PC-3 (cell line): ENCODE measurements at regions of chr3 and their contacts with region 1.

Region 1: DNA sequence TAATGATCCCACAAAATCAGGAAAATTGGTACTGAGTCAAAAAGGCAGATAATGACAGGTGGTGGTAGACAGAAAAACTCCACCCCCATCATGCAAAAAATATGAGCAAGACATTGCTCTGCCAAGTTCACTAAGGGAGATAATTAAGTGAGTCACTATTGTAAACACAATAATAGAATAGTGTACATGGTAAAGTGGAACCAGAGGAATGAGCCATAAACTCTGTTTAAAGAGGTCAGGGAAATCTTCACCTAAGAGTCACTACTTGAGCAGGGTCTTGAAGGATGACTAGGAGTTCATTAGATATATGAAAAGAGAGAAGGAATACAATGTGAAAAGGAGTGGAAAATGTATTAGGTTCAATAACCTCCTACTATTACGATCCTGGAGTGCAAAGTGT is 213.4 kb upstream of the PEX5L start:
- DNase-seq: peak; percentile 95
- ATAC-seq: peak; percentile 88
- H3K4me3 ChIP-seq: no peak overlapping the region
- H3K27ac ChIP-seq: peak overlapping the region; percentile 58
- H3K4me1 ChIP-seq: peaks cover 46% of the 10 kb centered on the region
- H3K27me3 ChIP-seq: no peaks in the 10 kb centered on the region
- CTCF ChIP-seq: no peak

Region 2: GRCh38 chr3:179794355-179794754 is 455.8 kb before region 1 on chr3:
- CTCF ChIA-PET with region 1: no interaction called
- POLR2A ChIA-PET with region 1: no interaction called
- intact Hi-C with region 1: no loop called
- DNase-seq: no peak
- ATAC-seq: no peak
- H3K4me3 ChIP-seq: no peak overlapping the region
- H3K27ac ChIP-seq: no peak overlapping the region
- H3K4me1 ChIP-seq: no peaks in the 10 kb centered on the region
- H3K27me3 ChIP-seq: no peaks in the 10 kb centered on the region
- CTCF ChIP-seq: no peak

Region 3: GRCh38 chr3:179811321-179812095 is 438.7 kb before region 1 on chr3:
- CTCF ChIA-PET with region 1: no interaction called
- POLR2A ChIA-PET with region 1: no interaction called
- intact Hi-C with region 1: loop called (anchors 10 kb)
- DNase-seq: peak; percentile 88
- ATAC-seq: peak; percentile 81
- H3K4me3 ChIP-seq: no peak overlapping the region
- H3K27ac ChIP-seq: peak overlapping the region; percentile 77
- H3K4me1 ChIP-seq: peaks cover 13% of the 10 kb centered on the region; the same call in 1 of the 2 replicates
- H3K27me3 ChIP-seq: no peaks in the 10 kb centered on the region
- CTCF ChIP-seq: peak; percentile 93

Region 4: GRCh38 chr3:180059356-180059755 is 190.8 kb before region 1 on chr3:
- CTCF ChIA-PET with region 1: no interaction called
- POLR2A ChIA-PET with region 1: no interaction called
- intact Hi-C with region 1: no loop called
- DNase-seq: peak; percentile 61
- ATAC-seq: peak; percentile 70
- H3K4me3 ChIP-seq: no peak overlapping the region
- H3K27ac ChIP-seq: no peak overlapping the region
- H3K4me1 ChIP-seq: peaks cover 11% of the 10 kb centered on the region
- H3K27me3 ChIP-seq: no peaks in the 10 kb centered on the region
- CTCF ChIP-seq: no peak

Region 5: GRCh38 chr3:180116658-180117057 is 133.5 kb before region 1 on chr3:
- CTCF ChIA-PET with region 1: no interaction called
- POLR2A ChIA-PET with region 1: no interaction called
- intact Hi-C with region 1: no loop called
- DNase-seq: no peak
- ATAC-seq: no peak
- H3K4me3 ChIP-seq: no peak overlapping the region
- H3K27ac ChIP-seq: no peak overlapping the region
- H3K4me1 ChIP-seq: no peaks in the 10 kb centered on the region
- H3K27me3 ChIP-seq: no peaks in the 10 kb centered on the region
- CTCF ChIP-seq: no peak

Region 6: DNA sequence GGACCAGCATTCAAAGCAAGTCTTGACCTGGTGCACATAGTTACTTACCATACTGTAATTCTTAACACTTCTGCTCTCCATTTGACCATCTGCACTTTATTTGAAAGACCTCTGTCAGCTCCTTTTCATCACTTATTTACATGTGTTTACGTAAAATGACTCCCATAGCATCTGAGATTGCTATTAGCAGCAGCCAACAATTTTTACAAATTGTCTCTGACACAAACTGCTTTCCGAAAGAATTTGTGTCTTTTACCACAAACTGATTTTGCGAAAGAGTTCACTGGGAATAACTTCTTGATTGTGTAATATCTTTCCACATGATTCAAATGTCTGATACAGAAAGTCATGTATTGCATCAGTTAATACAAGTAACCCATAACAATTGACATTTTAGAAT is 69.4 kb before region 1 on chr3:
- CTCF ChIA-PET with region 1: no interaction called
- POLR2A ChIA-PET with region 1: no interaction called
- intact Hi-C with region 1: no loop called
- DNase-seq: no peak
- ATAC-seq: no peak
- H3K4me3 ChIP-seq: no peak overlapping the region
- H3K27ac ChIP-seq: no peak overlapping the region
- H3K4me1 ChIP-seq: no peaks in the 10 kb centered on the region
- H3K27me3 ChIP-seq: no peaks in the 10 kb centered on the region
- CTCF ChIP-seq: no peak

Region 7: GRCh38 chr3:180267202-180267843 is 17.2 kb after region 1 on chr3:
- CTCF ChIA-PET with region 1: no interaction called
- POLR2A ChIA-PET with region 1: interaction called, 15 read pairs
- intact Hi-C with region 1: no loop called
- DNase-seq: no peak
- ATAC-seq: no peak
- H3K4me3 ChIP-seq: no peak overlapping the region
- H3K27ac ChIP-seq: no peak overlapping the region
- H3K4me1 ChIP-seq: no peaks in the 10 kb centered on the region
- H3K27me3 ChIP-seq: no peaks in the 10 kb centered on the region
- CTCF ChIP-seq: no peak

Region 8: GRCh38 chr3:180306691-180307090 is 56.5 kb after region 1 on chr3:
- CTCF ChIA-PET with region 1: interaction called, 9 read pairs
- POLR2A ChIA-PET with region 1: no interaction called
- intact Hi-C with region 1: loop called (anchors 1 kb)
- DNase-seq: peak; percentile 90
- ATAC-seq: peak; percentile 87
- H3K4me3 ChIP-seq: peak overlapping the region; percentile 48
- H3K27ac ChIP-seq: peak overlapping the region; percentile 47
- H3K4me1 ChIP-seq: peaks cover 40% of the 10 kb centered on the region
- H3K27me3 ChIP-seq: no peaks in the 10 kb centered on the region
- CTCF ChIP-seq: no peak

Region 9: DNA sequence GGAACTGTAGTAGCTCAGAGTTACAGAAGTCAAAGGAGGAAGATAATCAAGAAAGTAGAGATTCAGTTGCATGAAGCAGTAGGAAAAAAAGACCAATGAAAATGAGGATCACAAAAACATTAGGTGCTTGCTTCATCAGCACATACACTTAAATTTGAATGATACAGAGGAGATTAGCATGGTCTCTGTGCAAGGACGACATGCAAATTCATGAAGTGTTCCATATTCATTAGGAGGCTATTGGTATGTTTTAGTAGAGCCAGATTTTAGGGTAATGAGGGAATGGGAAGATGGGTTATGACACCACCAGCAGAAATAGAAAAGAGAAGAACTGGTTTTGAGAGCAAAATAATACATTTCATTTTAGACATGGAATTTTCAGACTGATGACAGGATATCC is 330.8 kb after region 1 on chr3:
- CTCF ChIA-PET with region 1: no interaction called
- POLR2A ChIA-PET with region 1: no interaction called
- intact Hi-C with region 1: loop called (anchors 5 kb)
- DNase-seq: no peak
- ATAC-seq: no peak
- H3K4me3 ChIP-seq: no peak overlapping the region
- H3K27ac ChIP-seq: no peak overlapping the region
- H3K4me1 ChIP-seq: no peaks in the 10 kb centered on the region
- H3K27me3 ChIP-seq: no peaks in the 10 kb centered on the region
- CTCF ChIP-seq: no peak